Ovary (tissue), 10 donors: ENCODE measurements at regions of chr1 and their contacts with region 1.

Region 1: GRCh38 chr1:44636688-44637598 is 37.3 kb downstream of the TMEM53 start:
- DNase-seq: no peak
- H3K4me3 ChIP-seq: no peak overlapping the region
- H3K27ac ChIP-seq: no peak overlapping the region
- H3K4me1 ChIP-seq: no peaks in the 10 kb centered on the region
- H3K27me3 ChIP-seq: no peaks in the 10 kb centered on the region
- CTCF ChIP-seq: no peak
- EP300 ChIP-seq: no peak
- POLR2A ChIP-seq: no peak

Region 2: DNA sequence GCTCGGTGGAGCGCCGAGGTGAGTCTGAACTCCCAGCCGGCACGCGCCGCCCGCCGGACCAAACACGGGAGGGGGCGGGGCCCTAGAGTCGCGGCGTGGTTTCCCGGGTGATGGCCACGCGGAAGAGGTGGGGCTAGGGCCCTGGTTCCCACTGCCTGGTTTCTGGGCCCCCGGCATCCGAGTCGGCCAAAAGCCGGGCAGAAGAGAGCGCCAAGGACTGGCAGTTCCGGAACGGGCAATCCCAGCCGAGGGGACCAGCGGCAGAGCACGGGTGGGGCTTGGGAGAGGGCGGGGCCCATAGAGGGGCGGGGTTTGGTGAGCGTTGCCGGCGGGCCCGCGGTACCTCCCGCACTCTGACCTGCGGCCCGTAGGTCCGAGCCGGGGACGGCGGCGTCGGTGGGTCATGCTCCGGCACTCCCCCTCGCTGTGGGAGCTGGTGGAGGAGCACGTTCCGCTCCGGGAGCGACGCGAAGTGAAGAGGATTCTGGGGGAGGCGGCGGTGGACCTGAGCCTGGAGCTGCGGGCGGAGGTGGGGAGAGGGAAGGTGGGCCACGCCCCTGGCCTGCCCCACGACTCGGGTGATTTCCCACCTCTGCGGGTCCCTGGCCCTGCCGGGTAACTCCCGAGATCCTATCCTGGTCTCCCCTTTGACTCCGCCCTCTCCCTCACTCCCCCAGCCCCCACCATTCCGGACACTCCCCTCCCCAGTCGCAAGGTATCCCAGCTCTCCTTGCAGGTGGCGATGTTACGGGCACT is 645.3 kb before region 1 on chr1 and contains the start of gene CCDC24:
- intact Hi-C with region 1: loop called in 1 of 4 experiments (anchors 5 kb)
- DNase-seq: peak; percentile 85 to 91 (median 88)
- H3K4me3 ChIP-seq: peak within 1 kb of the TSS; percentile 62
- H3K27ac ChIP-seq: peak within 1 kb of the TSS; percentile 19 to 51
- H3K4me1 ChIP-seq: peaks cover 1% of the 10 kb centered on the region
- H3K27me3 ChIP-seq: no peaks in the 10 kb centered on the region
- CTCF ChIP-seq: no peak
- EP300 ChIP-seq: no peak
- POLR2A ChIP-seq: no peak
- total RNA-seq, gene CCDC24: 2.1 to 23.3 (median 7.3) TPM